Endothelial cell of umbilical vein (primary cell): ENCODE measurements at regions of chr7 and their contacts with region 1.

Region 1: DNA sequence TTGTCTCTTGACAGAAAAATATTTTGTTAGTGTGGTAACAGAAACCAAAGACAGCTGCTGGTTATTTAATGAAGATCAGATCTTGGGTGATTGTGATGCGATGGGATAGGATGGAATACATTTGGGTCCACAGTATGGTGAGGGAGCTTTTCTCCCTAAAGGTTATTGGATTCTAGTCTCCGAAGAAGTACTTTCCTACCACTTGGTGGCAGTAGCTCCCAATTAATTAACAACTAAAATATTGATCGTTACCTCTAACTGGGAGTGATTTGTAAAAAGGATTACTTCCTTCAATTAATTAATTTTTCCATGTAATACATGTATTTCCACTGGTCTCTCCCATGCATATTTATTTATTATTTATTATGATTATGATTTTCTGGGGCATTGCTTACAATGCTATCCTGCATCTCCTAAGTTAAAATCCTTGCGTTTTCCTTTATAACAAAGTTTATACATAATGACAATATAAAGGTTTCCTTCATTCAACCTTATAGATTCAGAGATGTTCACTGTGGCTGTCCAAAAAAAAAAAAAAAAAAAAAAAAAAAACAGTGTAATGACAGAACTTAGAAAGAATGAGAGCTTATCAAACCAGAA is 25.6 kb downstream of the TMEM196 start:
- DNase-seq: peak; percentile 43
- H3K4me3 ChIP-seq: no peak overlapping the region
- H3K27ac ChIP-seq: no peak overlapping the region
- H3K4me1 ChIP-seq: no peaks in the 10 kb centered on the region
- H3K27me3 ChIP-seq: peaks cover 1 to 12% of the 10 kb centered on the region in 2 experiments
- CTCF ChIP-seq: peak; percentile 25 to 46
- POLR2A ChIP-seq: no peak

Region 2: DNA sequence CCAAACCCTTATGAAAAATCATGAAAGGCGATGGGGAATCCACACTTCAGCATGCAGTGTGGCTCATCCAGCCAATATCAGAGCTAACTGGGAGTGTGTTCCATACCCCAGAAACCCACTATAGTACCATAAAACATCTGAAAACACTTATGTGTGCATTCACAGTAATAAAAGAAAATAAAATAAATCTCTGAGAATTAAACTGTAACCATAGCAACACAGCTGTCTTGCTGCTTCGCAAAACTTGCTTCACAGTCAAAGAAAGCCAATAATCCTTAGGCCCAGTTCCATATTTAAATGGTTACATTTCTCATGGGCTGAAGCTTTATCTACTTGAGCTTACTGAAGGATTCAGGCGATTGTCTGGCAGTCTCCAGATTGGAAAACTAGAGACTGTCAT is 19.1 kb before region 1 on chr7:
- CTCF ChIA-PET with region 1: interaction called, 28 read pairs
- POLR2A ChIA-PET with region 1: no interaction called
- dilution Hi-C with region 1: no loop called
- intact Hi-C with region 1: no loop called
- DNase-seq: no peak
- H3K4me3 ChIP-seq: no peak overlapping the region
- H3K27ac ChIP-seq: no peak overlapping the region
- H3K4me1 ChIP-seq: no peaks in the 10 kb centered on the region
- H3K27me3 ChIP-seq: peaks cover 0 to 22% of the 10 kb centered on the region in 2 experiments
- CTCF ChIP-seq: no peak
- POLR2A ChIP-seq: no peak

Region 3: DNA sequence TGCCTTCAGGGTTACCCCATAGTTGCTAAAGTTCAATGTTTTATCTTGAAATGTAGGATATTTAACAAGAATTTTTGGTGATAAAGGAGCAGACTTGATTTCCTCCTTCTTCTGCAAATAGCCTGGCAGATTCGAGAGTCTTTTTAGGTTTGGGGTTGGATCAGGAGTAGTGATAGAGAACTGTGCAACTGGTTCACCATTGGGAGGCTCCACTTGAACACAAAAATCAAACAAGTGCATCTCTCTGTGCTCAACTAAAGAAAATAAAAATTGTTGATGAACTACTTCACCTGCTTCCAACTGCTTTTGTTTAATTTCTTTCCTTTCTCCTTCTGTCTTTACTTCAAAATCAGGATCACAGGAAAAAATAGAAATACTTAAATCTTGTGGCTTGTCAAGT is 410.8 kb after region 1 on chr7:
- CTCF ChIA-PET with region 1: interaction called, 11 read pairs
- POLR2A ChIA-PET with region 1: no interaction called
- dilution Hi-C with region 1: no loop called
- intact Hi-C with region 1: no loop called
- DNase-seq: peak; percentile 39
- H3K4me3 ChIP-seq: no peak overlapping the region
- H3K27ac ChIP-seq: no peak overlapping the region
- H3K4me1 ChIP-seq: no peaks in the 10 kb centered on the region
- H3K27me3 ChIP-seq: no peaks in the 10 kb centered on the region
- CTCF ChIP-seq: peak in 1 of 2 donors; percentile 18
- POLR2A ChIP-seq: no peak

Region 4: DNA sequence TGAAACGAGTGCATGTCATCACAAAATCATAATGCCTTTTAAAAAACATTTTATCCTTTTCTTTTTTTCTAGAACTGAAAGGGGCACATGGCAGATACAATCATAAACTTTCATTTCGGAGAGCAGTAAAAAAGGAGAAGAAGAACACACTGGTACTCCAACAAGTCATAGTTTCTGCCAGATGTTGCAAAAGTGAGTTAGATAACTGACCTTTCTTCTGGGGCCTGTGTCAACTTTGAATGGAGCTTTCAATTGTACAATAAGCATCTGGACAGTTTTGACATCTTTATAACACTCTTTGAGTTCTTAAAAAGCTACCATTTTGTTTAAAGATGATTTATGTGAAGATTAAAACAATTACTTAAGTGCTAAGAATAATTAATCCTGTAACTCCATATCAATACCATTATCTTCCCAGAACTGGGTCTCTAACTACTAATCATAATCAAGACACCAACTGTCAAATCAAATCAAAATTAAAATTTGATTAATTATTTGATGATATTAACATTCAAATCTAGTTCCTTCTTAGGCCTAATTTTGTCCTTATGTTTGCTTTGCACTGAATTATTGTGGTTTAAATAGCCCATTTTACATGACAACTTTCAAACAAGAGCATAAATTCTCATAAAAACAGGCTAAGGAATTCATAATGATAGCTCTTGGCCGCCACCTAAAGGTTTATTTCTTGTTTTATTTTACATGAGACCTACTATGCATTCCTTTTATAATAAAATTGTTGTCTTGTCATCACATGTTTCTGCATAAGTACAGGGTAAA is 563.3 kb after region 1 on chr7:
- CTCF ChIA-PET with region 1: interaction called, 62 read pairs
- POLR2A ChIA-PET with region 1: no interaction called
- dilution Hi-C with region 1: no loop called
- intact Hi-C with region 1: no loop called
- DNase-seq: peak; percentile 76
- H3K4me3 ChIP-seq: no peak overlapping the region
- H3K27ac ChIP-seq: no peak overlapping the region
- H3K4me1 ChIP-seq: peaks cover 19% of the 10 kb centered on the region
- H3K27me3 ChIP-seq: no peaks in the 10 kb centered on the region
- CTCF ChIP-seq: peak; percentile 19 to 26
- POLR2A ChIP-seq: no peak

Region 5: DNA sequence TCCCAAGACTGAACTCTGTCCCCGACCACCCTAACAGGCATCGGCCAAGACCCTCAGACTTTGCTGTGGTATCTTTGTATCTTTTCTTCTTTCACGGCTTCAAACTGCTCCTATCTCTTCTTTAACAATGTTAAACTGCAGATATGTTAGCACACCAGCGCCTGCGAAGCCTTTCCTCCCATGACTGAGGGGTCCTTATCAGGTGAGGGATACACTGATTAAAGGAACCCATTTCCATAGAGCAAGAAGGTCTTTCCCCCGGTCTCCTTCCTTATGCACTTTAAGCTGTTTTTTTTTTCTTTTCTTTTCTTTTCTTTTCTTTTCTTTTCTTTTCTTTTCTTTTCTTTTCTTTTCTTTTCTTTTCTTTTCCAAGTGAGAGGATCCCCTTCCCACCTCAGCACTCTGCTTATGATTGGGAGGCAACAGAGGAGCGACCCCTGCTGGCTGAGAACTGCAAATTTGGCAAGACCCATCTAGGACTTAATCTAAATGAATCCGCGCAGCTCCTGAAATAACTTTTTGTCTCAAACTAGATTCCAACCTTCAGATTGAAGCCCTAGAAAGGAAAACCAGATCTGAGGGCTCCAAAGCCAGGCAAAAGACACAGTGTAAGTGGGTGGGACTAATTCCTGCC is 692.7 kb after region 1 on chr7:
- CTCF ChIA-PET with region 1: interaction called, 3 read pairs
- POLR2A ChIA-PET with region 1: no interaction called
- dilution Hi-C with region 1: no loop called
- intact Hi-C with region 1: loop called (anchors 2 kb)
- DNase-seq: peak; percentile 40
- H3K4me3 ChIP-seq: no peak overlapping the region
- H3K27ac ChIP-seq: no peak overlapping the region
- H3K4me1 ChIP-seq: peaks cover 14% of the 10 kb centered on the region
- H3K27me3 ChIP-seq: no peaks in the 10 kb centered on the region
- CTCF ChIP-seq: peak; percentile 28 to 33
- POLR2A ChIP-seq: no peak

Region 6: GRCh38 chr7:21253740-21254687 is 1506.2 kb after region 1 on chr7:
- CTCF ChIA-PET with region 1: interaction called, 15 read pairs
- POLR2A ChIA-PET with region 1: no interaction called
- dilution Hi-C with region 1: no loop called
- intact Hi-C with region 1: no loop called
- DNase-seq: peak; percentile 78
- H3K4me3 ChIP-seq: no peak overlapping the region
- H3K27ac ChIP-seq: no peak overlapping the region
- H3K4me1 ChIP-seq: no peaks in the 10 kb centered on the region
- H3K27me3 ChIP-seq: peaks cover 28 to 67% of the 10 kb centered on the region in 2 experiments
- CTCF ChIP-seq: peak; percentile 52 to 72
- POLR2A ChIP-seq: no peak